K562 (cell line): ENCODE measurements at regions of chr22 and their contacts with region 1.

Region 1: DNA sequence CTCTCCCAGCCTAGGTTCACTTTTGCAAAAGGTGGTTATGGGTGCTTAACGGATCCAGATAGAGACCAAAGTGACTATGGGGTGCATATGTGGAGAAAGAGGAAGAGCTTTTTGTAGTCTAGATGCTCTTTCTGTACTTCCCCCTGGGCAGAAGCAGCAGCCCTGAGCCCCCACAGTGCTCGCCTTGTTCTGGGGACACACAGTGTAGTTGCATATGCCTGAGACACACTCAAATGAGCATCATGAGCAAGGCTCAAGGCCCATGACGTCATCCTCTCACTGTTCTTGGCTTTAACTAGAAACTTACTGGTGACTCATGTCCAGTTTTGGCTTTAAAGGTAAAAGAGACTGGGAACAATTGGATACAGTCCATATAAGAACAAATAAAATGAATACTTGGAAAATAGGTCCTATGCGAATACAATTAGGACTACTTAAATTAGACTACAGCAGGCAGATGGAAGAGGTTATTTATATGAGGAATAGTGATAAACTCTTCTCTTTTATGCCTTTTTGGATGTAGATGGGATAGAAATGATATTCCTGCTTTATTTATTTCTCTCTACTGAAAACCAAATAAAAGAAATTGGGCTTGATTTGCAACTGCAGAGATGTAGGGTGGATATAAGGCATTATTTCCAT is 20.1 kb upstream of the PEX26 start:
- DNase-seq: peak in 3 of 4 experiments; percentile 34 to 71 (median 38)
- ATAC-seq: peak; percentile 46
- H3K4me3 ChIP-seq: no peak overlapping the region
- H3K27ac ChIP-seq: no peak overlapping the region
- H3K4me1 ChIP-seq: peaks cover 11 to 16% of the 10 kb centered on the region in 2 experiments; a peak in 4 of 5 replicates
- H3K27me3 ChIP-seq: peaks cover 19% of the 10 kb centered on the region in 2 experiments; a peak in 4 of 5 replicates
- CTCF ChIP-seq: no peak
- EP300 ChIP-seq: no peak
- POLR2A ChIP-seq: no peak
- RAD21 ChIP-seq: no peak

Region 2: GRCh38 chr22:17773606-17774205 is 284.0 kb before region 1 on chr22:
- CTCF ChIA-PET with region 1: no interaction called
- POLR2A ChIA-PET with region 1: no interaction called
- in situ Hi-C with region 1: no loop called
- intact Hi-C with region 1: loop called (anchors 10 kb)
- DNase-seq: peak; percentile 72 to 88 (median 83)
- ATAC-seq: peak; percentile 81
- H3K4me3 ChIP-seq: peak overlapping the region; percentile 76
- H3K27ac ChIP-seq: peak overlapping the region; percentile 81; the same call in 2 of the 3 replicates
- H3K4me1 ChIP-seq: peaks cover 19 to 74% of the 10 kb centered on the region in 2 experiments
- H3K27me3 ChIP-seq: no peaks in the 10 kb centered on the region
- CTCF ChIP-seq: no peak
- EP300 ChIP-seq: no peak
- POLR2A ChIP-seq: 0 out of 2 replicates have a peak, but pooled peaks have one; percentile 24
- RAD21 ChIP-seq: no peak

Region 3: DNA sequence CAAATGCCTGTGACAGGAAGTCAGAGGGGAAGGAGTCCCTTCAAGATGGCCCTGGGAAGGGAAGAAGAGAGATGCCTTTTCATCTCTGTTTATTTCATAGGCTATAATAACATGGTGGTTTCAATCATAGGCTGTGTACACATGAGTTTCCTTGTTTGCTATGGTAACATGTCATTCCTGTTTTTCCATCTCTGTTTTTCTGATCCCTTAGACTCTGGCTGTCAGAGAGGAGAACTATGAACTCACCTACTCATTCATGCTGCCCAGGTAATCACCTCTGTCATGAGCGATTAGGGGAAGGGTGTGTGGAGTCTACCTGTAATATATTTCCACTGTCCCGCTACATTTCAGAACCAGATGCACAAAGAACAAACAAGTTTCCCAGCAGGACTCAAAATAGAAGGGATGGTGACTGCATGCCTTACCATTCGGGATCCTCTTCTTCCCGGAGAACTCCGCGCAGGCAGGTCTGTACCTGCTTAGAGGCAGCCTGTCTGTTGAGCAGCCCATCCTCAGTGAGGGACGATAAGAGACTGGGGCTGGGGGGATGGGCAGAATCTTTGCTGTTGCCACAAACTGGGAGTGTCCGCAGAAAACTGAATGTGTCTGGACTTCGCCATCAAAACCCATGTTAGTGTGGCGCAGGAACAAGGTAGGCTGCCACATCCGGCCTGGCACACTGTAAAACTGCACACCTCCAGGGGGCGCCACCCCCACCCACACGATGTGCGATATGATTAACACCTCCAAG is 13.0 kb after region 1 on chr22:
- CTCF ChIA-PET with region 1: interaction called, 4 read pairs
- POLR2A ChIA-PET with region 1: interaction called, 11 read pairs
- in situ Hi-C with region 1: no loop called
- intact Hi-C with region 1: no loop called
- DNase-seq: peak in 1 of 4 experiments; percentile 40
- ATAC-seq: peak; percentile 11; the same call in 2 of the 3 replicates
- H3K4me3 ChIP-seq: no peak overlapping the region
- H3K27ac ChIP-seq: no peak overlapping the region
- H3K4me1 ChIP-seq: peaks cover 4 to 5% of the 10 kb centered on the region in 2 experiments; a peak in 2 of 5 replicates
- H3K27me3 ChIP-seq: peaks cover 33 to 41% of the 10 kb centered on the region in 2 experiments
- CTCF ChIP-seq: peak; percentile 38 to 72 (median 46)
- EP300 ChIP-seq: no peak
- POLR2A ChIP-seq: no peak
- RAD21 ChIP-seq: no peak